ENCODE measurements at regions of chr9 and their contacts with region 1.

Region 1: GRCh38 chr9:18017136-18017535 is 438.3 kb downstream of the SH3GL2 start:
- DNase-seq: no peak
- H3K4me3 ChIP-seq: no peak overlapping the region
- H3K4me3 Mint-ChIP-seq: no peak overlapping the region
- H3K27ac Mint-ChIP-seq: no peak overlapping the region
- H3K4me1 ChIP-seq: 0 out of 2 replicates have a peak, but pooled peaks cover 7% of the 10 kb centered on the region
- H3K4me1 Mint-ChIP-seq: no peaks in the 10 kb centered on the region
- H3K27me3 ChIP-seq: no peaks in the 10 kb centered on the region
- H3K27me3 Mint-ChIP-seq: no peaks in the 10 kb centered on the region
- CTCF ChIP-seq: peak; percentile 9 to 28

Region 2: DNA sequence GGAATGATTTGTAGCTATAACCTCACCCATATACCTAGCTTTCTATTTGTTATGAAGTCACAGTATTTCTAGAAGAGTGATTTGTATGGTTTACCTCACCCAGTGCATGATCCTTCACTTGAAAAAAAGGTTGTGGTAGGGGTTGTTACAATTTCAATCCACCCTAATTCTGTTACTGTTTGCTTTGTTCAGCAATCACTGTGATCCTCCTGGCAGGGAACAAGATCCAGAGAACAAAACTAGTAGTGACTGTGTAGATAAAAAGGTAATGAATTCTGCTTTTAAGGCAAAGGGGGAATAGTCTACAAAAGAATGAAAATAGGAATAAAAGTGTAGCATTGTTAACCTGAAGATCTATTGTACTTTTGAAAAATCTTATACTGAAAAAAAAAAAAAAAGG is 629.6 kb before region 1 on chr9:
- CTCF ChIA-PET with region 1: no interaction called
- POLR2A ChIA-PET with region 1: no interaction called
- intact Hi-C with region 1: no loop called
- DNase-seq: no peak
- H3K4me3 ChIP-seq: no peak overlapping the region
- H3K4me3 Mint-ChIP-seq: no peak overlapping the region
- H3K27ac Mint-ChIP-seq: no peak overlapping the region
- H3K4me1 ChIP-seq: no peaks in the 10 kb centered on the region
- H3K4me1 Mint-ChIP-seq: no peaks in the 10 kb centered on the region
- H3K27me3 ChIP-seq: no peaks in the 10 kb centered on the region
- H3K27me3 Mint-ChIP-seq: no peaks in the 10 kb centered on the region
- CTCF ChIP-seq: no peak

Region 3: GRCh38 chr9:18143028-18143745 is 126.1 kb after region 1 on chr9:
- CTCF ChIA-PET with region 1: no interaction called
- POLR2A ChIA-PET with region 1: no interaction called
- intact Hi-C with region 1: loop called (anchors 1 kb)
- DNase-seq: peak in 1 of 2 experiments; percentile 11
- H3K4me3 ChIP-seq: no peak overlapping the region
- H3K4me3 Mint-ChIP-seq: no peak overlapping the region
- H3K27ac Mint-ChIP-seq: no peak overlapping the region
- H3K4me1 ChIP-seq: no peaks in the 10 kb centered on the region
- H3K4me1 Mint-ChIP-seq: no peaks in the 10 kb centered on the region
- H3K27me3 ChIP-seq: no peaks in the 10 kb centered on the region
- H3K27me3 Mint-ChIP-seq: no peaks in the 10 kb centered on the region
- CTCF ChIP-seq: peak in 1 of 2 experiments; percentile 16

Measured in Caco-2 (cell line).